ENCODE measurements at regions of chr10 and their contacts with region 1.

Region 1: GRCh38 chr10:93006435-93007039 is 54.1 kb upstream of the CYP26C1 start:
- DNase-seq: no peak
- H3K4me3 ChIP-seq: no peak overlapping the region
- H3K27me3 ChIP-seq: no peaks in the 10 kb centered on the region
- CTCF ChIP-seq: peak; percentile 74

Region 2: DNA sequence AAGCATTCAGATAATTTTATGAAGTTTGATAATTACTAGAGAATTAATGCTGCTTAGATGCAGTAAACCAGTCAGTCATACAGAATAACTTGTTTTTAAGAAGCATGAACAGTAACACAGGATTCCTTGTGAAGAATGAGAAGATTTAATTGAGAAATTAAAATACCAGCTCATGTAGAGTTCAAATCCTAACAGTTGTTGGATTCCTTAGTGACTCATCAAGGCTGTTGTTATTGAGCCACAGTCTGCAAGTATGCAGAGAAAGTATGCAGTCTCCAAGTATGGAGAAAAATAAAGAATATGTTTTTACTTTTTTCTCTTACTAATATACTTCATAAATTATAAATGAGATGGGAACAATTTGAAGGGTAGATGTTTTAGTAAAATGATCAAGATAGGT is 23.9 kb after region 1 on chr10:
- CTCF ChIA-PET with region 1: interaction called, 42 read pairs
- POLR2A ChIA-PET with region 1: no interaction called
- DNase-seq: peak; percentile 62
- H3K4me3 ChIP-seq: no peak overlapping the region
- H3K27me3 ChIP-seq: no peaks in the 10 kb centered on the region
- CTCF ChIP-seq: no peak

Region 3: DNA sequence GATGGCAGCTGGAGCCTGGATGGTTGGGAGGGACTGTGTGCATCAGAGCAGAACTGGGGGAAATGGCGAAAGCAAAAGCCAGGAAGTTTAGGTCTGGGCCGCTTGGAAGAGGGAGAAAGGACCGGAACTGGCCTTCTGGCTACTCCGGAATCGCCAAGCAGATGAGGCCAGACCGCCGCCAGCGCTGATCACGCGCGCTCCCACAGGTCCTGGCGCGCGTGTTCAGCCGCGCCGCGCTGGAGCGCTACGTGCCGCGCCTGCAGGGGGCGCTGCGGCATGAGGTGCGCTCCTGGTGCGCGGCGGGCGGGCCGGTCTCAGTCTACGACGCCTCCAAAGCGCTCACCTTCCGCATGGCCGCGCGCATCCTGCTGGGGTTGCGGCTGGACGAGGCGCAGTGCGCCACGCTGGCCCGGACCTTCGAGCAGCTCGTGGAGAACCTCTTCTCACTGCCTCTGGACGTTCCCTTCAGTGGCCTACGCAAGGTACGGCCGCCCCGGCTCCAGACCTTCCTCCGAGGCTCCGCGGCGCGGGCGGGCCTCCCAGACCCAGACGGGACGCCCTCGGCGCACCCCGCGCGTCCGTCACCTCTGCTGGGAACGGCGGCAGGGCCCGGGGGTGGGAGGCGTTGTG is 56.1 kb after region 1 on chr10:
- CTCF ChIA-PET with region 1: interaction called, 12 read pairs
- POLR2A ChIA-PET with region 1: no interaction called
- DNase-seq: no peak
- H3K4me3 ChIP-seq: peak overlapping the region; percentile 32
- H3K27me3 ChIP-seq: peaks cover 53% of the 10 kb centered on the region
- CTCF ChIP-seq: peak; percentile 48

Region 4: GRCh38 chr10:93180482-93180931 is 174.0 kb after region 1 on chr10:
- CTCF ChIA-PET with region 1: no interaction called
- POLR2A ChIA-PET with region 1: no interaction called
- DNase-seq: peak; percentile 35
- H3K4me3 ChIP-seq: no peak overlapping the region
- H3K27me3 ChIP-seq: no peaks in the 10 kb centered on the region; the same call in 1 of the 2 replicates
- CTCF ChIP-seq: no peak

Measured in BJ (cell line).